Activated CD4-positive, alpha-beta T cell treated with anti-CD3 and anti-CD28 coated beads for 36 hours (primary cell): ENCODE measurements at regions of chr11 and their contacts with region 1.

Region 1: DNA sequence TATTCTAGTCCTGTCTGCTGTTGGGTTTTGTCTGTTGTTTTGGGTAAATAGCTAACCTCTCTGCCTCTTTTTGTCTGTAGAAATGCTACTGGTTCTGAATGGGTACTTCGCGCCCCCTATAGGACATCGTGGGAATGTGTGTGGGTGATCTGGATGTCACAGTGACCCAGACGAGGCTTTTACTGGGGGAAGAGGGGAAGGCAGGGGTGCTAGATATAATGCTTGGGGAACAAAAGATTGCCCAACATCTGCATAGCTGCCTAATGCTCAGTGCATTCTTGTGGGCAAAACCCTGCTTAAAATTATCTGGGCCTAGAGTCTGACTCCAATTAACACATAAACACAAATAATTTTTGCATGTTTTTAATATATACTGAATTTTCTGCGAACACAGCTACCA is 57.7 kb downstream of the BMAL1 start:
- DNase-seq: peak; percentile 84
- ATAC-seq: peak; percentile 16
- H3K4me3 Mint-ChIP-seq: no peak overlapping the region
- H3K27ac Mint-ChIP-seq: no peak overlapping the region
- H3K4me1 Mint-ChIP-seq: peaks cover 78% of the 10 kb centered on the region
- H3K27me3 Mint-ChIP-seq: no peaks in the 10 kb centered on the region

Region 2: DNA sequence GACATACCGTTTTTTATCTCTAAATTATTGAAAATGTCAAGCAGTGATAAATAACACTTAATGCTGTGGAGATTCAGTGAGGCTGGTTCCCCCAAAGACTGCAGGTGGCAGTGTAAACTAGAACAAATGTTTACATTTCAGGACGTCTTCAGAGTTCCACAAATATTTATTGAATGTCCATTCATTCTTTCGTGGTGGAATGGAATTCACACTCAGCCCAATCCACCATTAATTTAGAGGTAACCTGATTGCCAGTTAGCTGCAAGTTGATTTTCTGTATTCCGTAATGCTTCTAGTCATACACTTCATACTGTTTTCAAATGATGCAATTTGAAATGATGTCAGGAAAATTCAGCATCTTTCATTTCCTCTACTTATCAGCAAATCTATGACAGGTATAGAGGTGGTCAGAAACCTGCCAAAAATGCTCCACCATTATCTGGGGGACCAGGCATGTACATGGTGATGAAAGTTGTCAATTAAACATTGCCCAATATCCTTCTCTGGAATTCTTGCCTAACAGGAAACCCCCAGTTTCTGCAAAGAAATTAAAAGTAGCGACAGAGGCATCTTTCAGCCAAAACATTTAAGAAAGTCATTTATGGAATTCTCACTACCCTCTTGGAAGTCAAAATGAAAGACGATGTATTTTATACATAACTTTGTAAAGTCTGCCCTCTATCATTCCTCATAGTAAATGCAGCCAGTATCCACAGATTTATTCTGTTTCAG is 152.1 kb before region 1 on chr11:
- CTCF ChIA-PET with region 1: interaction called, 8 read pairs
- POLR2A ChIA-PET with region 1: no interaction called
- intact Hi-C with region 1: loop called in 1 of 2 experiments (anchors 2 kb)
- DNase-seq: peak; percentile 11
- ATAC-seq: peak; percentile 71
- H3K4me3 Mint-ChIP-seq: no peak overlapping the region
- H3K27ac Mint-ChIP-seq: no peak overlapping the region
- H3K4me1 Mint-ChIP-seq: peaks cover 10% of the 10 kb centered on the region
- H3K27me3 Mint-ChIP-seq: peaks cover 19% of the 10 kb centered on the region

Region 3: DNA sequence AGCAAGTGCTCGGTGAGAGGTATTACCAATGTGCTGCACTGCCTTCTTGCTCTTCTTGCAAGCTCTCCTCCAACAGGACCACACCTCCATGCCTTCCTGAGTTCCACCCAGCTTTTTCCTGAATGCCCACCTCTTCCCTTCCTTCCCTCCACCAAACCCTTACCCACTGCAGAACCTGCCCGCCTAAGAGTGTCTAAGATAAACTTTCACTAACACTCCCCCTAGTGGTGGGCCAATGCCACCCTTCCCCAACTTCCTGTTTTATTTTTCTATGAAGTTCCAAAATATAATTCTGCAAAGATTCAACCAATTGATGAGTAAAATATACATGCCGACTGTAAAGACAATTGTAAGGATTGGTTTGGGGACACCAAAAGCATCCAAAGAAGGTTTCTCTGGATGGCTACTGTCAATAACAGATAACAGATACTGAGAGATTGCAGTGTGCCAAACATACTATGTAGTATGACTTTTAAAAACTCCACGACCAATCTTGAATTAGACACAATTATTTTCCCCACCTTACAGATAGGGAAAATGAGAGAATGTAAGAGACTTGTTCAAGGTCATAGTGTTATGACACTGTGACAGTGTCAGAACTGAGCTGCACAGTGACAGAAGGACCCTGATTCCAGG is 96.3 kb before region 1 on chr11:
- CTCF ChIA-PET with region 1: interaction called, 16 read pairs
- POLR2A ChIA-PET with region 1: no interaction called
- intact Hi-C with region 1: no loop called
- DNase-seq: peak; percentile 70
- ATAC-seq: peak; percentile 70
- H3K4me3 Mint-ChIP-seq: no peak overlapping the region
- H3K27ac Mint-ChIP-seq: no peak overlapping the region
- H3K4me1 Mint-ChIP-seq: no peaks in the 10 kb centered on the region
- H3K27me3 Mint-ChIP-seq: peaks cover 8% of the 10 kb centered on the region

Region 4: GRCh38 chr11:13256216-13256615 is 79.1 kb before region 1 on chr11:
- CTCF ChIA-PET with region 1: interaction called, 17 read pairs
- POLR2A ChIA-PET with region 1: no interaction called
- intact Hi-C with region 1: no loop called
- DNase-seq: no peak
- ATAC-seq: no peak
- H3K4me3 Mint-ChIP-seq: no peak overlapping the region
- H3K27ac Mint-ChIP-seq: no peak overlapping the region
- H3K4me1 Mint-ChIP-seq: peaks cover 16% of the 10 kb centered on the region
- H3K27me3 Mint-ChIP-seq: no peaks in the 10 kb centered on the region

Region 5: DNA sequence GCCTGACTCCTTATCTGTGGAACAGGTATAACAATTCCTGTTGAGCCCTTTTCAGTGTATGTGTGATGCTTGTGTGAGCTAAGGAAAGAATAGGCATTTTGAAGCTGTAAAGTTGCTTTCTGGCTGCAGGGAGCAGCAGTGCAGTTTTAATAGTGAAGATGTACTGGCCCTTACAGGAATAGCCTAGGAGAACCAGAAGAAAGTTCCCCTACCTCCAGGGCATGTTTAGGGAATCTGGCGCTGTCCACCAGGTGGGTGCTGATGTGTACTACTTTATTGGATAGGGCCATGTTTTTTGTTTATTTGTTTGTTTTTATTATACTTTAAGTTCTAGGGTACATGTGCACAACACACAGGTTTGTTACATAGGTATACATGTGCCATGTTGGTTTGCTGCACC is 46.2 kb before region 1 on chr11:
- CTCF ChIA-PET with region 1: interaction called, 8 read pairs
- POLR2A ChIA-PET with region 1: interaction called, 4 read pairs
- intact Hi-C with region 1: loop called in 1 of 2 experiments (anchors 2 kb)
- DNase-seq: no peak
- ATAC-seq: no peak
- H3K4me3 Mint-ChIP-seq: no peak overlapping the region
- H3K27ac Mint-ChIP-seq: no peak overlapping the region
- H3K4me1 Mint-ChIP-seq: peaks cover 80% of the 10 kb centered on the region
- H3K27me3 Mint-ChIP-seq: no peaks in the 10 kb centered on the region

Region 6: DNA sequence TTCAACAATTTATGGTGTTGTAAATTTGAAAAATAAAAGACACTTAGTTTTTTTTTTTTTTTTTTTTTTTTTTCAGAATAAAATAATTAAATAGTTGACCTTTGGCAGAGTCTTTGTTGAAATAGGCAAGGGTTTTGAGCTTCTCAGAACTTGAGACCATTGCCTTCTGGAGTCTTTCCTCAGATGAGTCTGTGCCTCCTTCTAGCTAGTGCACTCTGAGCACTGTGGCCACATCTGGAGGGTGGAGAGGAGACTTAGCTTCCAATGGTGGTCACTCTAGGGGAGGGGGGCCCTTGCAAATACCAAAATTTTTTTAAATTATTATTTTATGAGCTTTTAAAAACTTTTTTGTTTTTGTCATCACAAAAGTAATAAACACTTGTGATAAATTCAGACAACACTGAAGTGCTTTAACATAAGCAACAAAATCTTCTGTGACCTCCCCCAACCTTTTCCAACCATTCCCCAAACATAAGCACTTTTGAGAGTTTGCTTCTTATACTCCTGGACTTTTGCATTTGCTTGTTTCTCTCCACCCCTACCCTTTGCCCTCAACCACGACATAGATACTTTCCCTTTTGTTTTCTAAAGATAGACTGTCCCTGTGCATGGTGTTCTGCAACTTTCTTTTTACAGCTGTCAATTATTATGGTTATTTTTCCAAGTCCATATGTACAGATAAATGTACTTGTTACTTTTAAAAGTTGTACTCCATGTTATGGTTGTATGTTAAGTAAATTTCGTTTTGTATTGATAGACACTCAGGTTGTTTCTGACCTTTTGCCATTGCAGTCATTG is 16.6 kb before region 1 on chr11:
- CTCF ChIA-PET with region 1: interaction called, 32 read pairs
- POLR2A ChIA-PET with region 1: no interaction called
- intact Hi-C with region 1: no loop called
- DNase-seq: no peak
- ATAC-seq: peak; percentile 74
- H3K4me3 Mint-ChIP-seq: peak overlapping the region; percentile 40
- H3K27ac Mint-ChIP-seq: peak overlapping the region; percentile 74
- H3K4me1 Mint-ChIP-seq: peaks cover 63% of the 10 kb centered on the region
- H3K27me3 Mint-ChIP-seq: no peaks in the 10 kb centered on the region

Region 7: DNA sequence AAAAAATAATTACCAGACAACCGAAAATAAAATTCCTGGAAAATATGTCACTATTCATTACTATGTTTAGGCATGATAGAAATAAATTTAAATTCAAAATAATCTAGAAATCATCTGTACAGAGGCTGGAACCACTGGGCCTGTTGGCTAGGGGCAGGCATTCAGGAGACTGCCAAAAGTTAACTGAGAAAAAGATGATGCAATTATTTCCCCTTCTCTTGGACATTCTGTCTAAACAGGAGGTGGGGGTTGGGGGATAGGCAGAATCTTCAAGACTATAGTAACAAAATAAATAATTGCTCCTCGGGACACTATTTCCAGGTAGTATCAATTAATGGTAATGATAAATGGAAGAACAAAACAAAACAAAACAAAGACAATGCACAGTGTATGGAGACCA is 113.6 kb after region 1 on chr11:
- CTCF ChIA-PET with region 1: no interaction called
- POLR2A ChIA-PET with region 1: no interaction called
- intact Hi-C with region 1: no loop called
- DNase-seq: no peak
- ATAC-seq: no peak
- H3K4me3 Mint-ChIP-seq: no peak overlapping the region
- H3K27ac Mint-ChIP-seq: no peak overlapping the region
- H3K4me1 Mint-ChIP-seq: peaks cover 48% of the 10 kb centered on the region
- H3K27me3 Mint-ChIP-seq: no peaks in the 10 kb centered on the region

Region 8: DNA sequence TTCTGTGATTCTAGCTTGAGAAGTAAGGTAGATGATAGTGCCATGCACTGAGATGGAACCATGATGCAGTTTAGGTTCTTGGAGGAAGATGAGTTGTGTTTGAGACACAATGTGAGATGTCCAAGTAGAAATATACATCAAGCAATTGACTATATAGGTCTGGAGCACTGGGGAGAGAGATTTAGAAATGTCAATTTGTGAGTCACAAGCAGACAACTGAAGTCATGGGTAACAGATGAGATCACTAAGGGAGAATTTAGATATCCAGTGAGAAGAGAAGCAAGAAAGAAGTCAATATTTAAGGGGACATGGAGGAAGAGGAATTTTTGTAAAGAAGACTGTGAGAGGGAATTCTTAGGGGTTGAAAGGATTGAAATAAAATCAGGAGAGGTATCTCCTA is 1088.8 kb after region 1 on chr11:
- CTCF ChIA-PET with region 1: no interaction called
- POLR2A ChIA-PET with region 1: no interaction called
- intact Hi-C with region 1: no loop called
- DNase-seq: no peak
- ATAC-seq: peak; percentile 72
- H3K4me3 Mint-ChIP-seq: no peak overlapping the region
- H3K27ac Mint-ChIP-seq: no peak overlapping the region
- H3K4me1 Mint-ChIP-seq: no peaks in the 10 kb centered on the region
- H3K27me3 Mint-ChIP-seq: no peaks in the 10 kb centered on the region